Caco-2 (cell line): ENCODE measurements at regions of chr1 and their contacts with region 1.

Region 1: DNA sequence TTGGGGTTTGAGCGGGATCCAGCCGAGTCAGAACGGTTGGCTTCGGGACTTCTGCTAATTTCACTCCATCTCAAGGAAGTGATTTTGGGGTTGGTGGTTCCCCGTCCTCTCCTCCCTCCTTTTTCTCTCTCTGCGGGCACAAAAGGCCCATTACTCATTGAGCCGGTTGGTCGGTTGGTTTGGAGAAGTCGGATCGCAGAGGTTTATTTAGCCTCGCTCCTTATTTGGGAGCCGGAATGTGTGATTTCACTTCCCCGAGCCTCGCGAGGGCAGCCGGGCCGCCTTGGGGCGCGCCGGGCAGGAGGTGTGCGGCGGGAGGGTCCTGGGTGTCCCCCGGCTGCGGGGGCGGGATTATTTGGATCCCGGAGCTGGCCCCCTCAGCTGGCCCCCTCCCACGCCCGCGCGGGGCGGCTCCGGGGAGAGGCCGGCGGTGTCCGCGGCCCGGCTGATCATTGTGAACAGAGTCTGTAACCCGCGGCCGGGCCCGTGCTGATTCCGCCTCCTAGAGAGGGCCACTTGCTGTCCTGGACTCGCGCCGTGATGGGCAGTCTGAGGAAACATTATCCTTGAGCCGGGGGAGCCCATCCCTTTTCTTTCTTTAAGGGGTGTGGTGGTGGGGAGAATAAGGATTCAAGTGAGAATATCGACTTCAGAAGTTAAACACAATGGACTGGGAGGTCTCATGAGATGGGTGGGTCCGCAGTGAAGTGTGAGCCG is 1.2 kb downstream of the MAPKAPK2 start:
- DNase-seq: peak; percentile 57 to 74
- H3K4me3 ChIP-seq: peak overlapping the region; percentile 72
- H3K4me3 Mint-ChIP-seq: peak overlapping the region; percentile 80
- H3K27ac Mint-ChIP-seq: peak overlapping the region; percentile 70
- H3K4me1 ChIP-seq: peaks cover 59% of the 10 kb centered on the region
- H3K4me1 Mint-ChIP-seq: peaks cover 46% of the 10 kb centered on the region
- H3K27me3 ChIP-seq: no peaks in the 10 kb centered on the region
- H3K27me3 Mint-ChIP-seq: no peaks in the 10 kb centered on the region
- CTCF ChIP-seq: no peak

Region 2: GRCh38 chr1:206537141-206537540 is 148.8 kb before region 1 on chr1:
- CTCF ChIA-PET with region 1: no interaction called
- POLR2A ChIA-PET with region 1: no interaction called
- intact Hi-C with region 1: no loop called
- DNase-seq: no peak
- H3K4me3 ChIP-seq: no peak overlapping the region
- H3K4me3 Mint-ChIP-seq: no peak overlapping the region
- H3K27ac Mint-ChIP-seq: no peak overlapping the region
- H3K4me1 ChIP-seq: no peaks in the 10 kb centered on the region
- H3K4me1 Mint-ChIP-seq: no peaks in the 10 kb centered on the region
- H3K27me3 ChIP-seq: no peaks in the 10 kb centered on the region; the same call in 1 of the 2 replicates
- H3K27me3 Mint-ChIP-seq: peaks cover 3% of the 10 kb centered on the region
- CTCF ChIP-seq: no peak

Region 3: DNA sequence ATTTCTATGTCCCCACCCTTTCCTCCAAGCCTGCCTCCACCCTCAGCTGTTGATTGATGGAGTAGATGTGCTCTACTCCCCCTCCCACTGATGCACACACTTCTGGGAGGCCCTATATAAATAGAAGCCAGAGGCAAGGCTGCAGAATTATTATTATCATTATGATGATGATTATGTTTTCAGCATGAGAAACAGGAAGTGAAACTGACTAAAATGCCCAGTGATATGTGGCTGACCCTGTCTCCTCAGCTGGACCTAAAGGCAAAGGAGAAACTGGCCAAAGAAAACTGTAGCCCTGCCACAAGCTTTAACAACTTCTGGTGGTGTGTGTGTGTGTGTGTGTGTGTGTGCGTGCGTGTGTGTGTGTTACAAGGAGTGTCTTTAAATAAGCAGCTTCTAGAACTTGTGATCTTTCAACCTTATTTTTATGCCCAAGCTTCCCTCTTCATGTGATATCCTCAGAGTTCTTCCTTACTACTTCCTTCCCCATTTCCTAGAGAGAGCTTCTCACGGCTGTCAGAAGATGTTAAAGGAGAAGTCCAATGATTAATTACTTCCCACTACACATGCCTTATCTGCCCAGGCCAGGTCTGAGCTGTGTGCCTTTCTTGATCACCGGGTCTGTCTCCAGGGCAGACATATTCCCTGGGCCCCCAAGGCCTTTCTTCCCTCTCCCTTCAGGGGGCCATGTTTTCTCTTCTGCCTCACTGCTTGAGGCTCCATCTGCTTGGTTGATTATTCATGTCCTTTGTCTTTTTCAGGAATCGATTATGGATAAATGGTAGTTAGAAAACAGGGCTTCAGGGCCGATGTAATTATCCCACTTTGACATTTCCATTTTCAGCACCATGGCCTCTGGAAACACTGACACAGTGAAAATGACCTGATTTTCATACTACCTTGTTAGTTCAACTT is 12.8 kb before region 1 on chr1:
- CTCF ChIA-PET with region 1: interaction called, 4 read pairs
- POLR2A ChIA-PET with region 1: interaction called, 7 read pairs
- intact Hi-C with region 1: loop called (anchors 2 kb)
- DNase-seq: no peak
- H3K4me3 ChIP-seq: no peak overlapping the region
- H3K4me3 Mint-ChIP-seq: no peak overlapping the region
- H3K27ac Mint-ChIP-seq: no peak overlapping the region
- H3K4me1 ChIP-seq: peaks cover 48% of the 10 kb centered on the region
- H3K4me1 Mint-ChIP-seq: peaks cover 37% of the 10 kb centered on the region
- H3K27me3 ChIP-seq: no peaks in the 10 kb centered on the region
- H3K27me3 Mint-ChIP-seq: no peaks in the 10 kb centered on the region
- CTCF ChIP-seq: no peak